ENCODE measurements at regions of chr20 and their contacts with region 1.

Region 1: GRCh38 chr20:37564388-37565133 is 36.9 kb upstream of the BLCAP start:
- DNase-seq: no peak
- ATAC-seq: peak; percentile 89
- H3K4me3 ChIP-seq: no peak overlapping the region
- H3K27ac ChIP-seq: no peak overlapping the region
- H3K4me1 ChIP-seq: peaks cover 4 to 9% of the 10 kb centered on the region in 2 experiments; a peak in 1 of 4 replicates
- H3K27me3 ChIP-seq: peaks cover 31% of the 10 kb centered on the region
- CTCF ChIP-seq: peak; percentile 82 to 94 (median 86)
- POLR2A ChIP-seq: no peak
- RAD21 ChIP-seq: peak; percentile 96

Region 2: DNA sequence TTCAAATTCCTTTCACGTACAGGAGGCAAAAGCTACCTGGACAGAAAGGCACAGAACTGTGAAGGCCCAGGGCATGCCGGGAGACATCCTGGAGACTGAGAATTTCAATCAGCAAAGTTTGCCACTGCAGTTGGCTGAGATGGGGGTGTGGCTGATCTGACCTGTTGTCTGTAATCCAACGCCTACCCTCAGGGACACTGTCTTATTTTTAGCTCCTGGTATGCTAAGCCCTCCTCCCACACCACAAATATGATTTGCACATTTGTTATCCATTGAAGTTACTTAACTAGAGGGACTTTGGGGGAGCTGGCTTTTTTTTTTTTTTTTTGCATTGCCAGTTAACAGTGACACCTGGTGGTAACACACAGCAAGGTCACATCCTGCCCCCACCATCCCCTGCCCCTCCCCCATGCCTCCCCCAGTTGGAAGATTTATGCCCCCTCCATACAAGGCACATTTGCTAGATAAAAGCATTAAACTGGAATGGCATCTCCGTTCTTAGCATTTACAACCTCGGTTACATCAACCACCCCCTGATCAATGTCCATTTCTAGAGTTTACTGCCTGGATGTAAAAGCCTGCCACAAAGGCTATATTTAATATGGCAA is 428.3 kb after region 1 on chr20:
- CTCF ChIA-PET with region 1: interaction called, 9 read pairs
- POLR2A ChIA-PET with region 1: no interaction called
- RAD21 ChIA-PET with region 1: interaction called in 1 of 2 experiments, 3 read pairs
- intact Hi-C with region 1: loop called (anchors 1 kb)
- DNase-seq: no peak
- ATAC-seq: peak; percentile 46; the same call in 1 of the 2 replicates
- H3K4me3 ChIP-seq: no peak overlapping the region
- H3K27ac ChIP-seq: no peak overlapping the region
- H3K4me1 ChIP-seq: 0 out of 4 replicates have a peak, but pooled peaks cover 0 to 3% of the 10 kb centered on the region in 2 experiments
- H3K27me3 ChIP-seq: no peaks in the 10 kb centered on the region
- CTCF ChIP-seq: peak; percentile 25 to 63 (median 46); a peak in 4 of 6 replicates
- POLR2A ChIP-seq: no peak
- RAD21 ChIP-seq: peak; percentile 37

Region 3: DNA sequence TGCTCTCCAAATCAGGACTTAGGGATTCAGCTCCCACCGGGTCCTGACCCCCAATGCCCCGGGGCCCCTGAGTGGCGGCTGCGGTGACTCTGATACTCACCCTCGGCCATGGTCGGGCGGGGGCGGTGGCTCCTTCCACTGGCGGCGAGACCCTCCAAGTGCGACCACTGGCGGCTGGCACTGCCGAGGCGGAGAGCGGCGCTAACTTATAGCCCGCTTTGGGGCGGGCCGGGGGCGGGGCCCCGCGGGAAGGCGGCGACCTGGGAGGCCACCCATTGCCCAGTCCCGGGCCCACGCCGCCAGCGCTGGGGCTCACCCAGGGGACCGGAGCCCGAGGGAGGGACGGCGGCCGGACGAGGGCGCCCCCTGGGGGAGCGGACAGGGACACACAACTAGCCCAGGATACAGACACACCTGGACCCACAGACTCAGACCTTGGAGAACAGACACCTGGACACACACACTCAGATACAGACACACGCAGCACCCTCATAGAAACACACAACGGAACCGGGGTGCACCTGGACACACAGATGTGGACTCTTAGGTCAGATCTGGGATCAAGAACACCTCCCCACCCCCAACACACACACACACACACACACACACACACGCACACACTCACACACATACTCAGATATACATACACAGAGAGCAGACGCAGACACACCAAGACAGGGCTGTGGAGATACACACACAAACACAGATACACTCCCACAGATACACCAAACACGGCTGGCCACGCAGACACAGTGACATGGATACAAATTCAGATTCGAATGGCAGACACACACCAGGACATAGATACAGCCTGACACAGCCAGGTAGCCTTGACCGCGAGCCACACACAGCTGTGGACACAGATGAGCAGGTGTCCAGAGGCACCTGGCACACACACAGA is 600.8 kb after region 1 on chr20 and contains the start of gene TGM2:
- CTCF ChIA-PET with region 1: no interaction called
- POLR2A ChIA-PET with region 1: no interaction called
- RAD21 ChIA-PET with region 1: no interaction called
- intact Hi-C with region 1: loop called (anchors 10 kb)
- DNase-seq: no peak
- ATAC-seq: peak; percentile 96
- H3K4me3 ChIP-seq: peak within 1 kb of the TSS; percentile 41 to 58
- H3K27ac ChIP-seq: no peak within 1 kb of the TSS; the same call in 1 of the 2 replicates
- H3K4me1 ChIP-seq: peaks cover 14 to 33% of the 10 kb centered on the region in 2 experiments; a peak in 3 of 4 replicates
- H3K27me3 ChIP-seq: no peaks in the 10 kb centered on the region
- CTCF ChIP-seq: peak; percentile 78 to 91 (median 81)
- POLR2A ChIP-seq: no peak
- RAD21 ChIP-seq: peak; percentile 86
- total RNA-seq, gene TGM2: 6.1 TPM

Region 4: DNA sequence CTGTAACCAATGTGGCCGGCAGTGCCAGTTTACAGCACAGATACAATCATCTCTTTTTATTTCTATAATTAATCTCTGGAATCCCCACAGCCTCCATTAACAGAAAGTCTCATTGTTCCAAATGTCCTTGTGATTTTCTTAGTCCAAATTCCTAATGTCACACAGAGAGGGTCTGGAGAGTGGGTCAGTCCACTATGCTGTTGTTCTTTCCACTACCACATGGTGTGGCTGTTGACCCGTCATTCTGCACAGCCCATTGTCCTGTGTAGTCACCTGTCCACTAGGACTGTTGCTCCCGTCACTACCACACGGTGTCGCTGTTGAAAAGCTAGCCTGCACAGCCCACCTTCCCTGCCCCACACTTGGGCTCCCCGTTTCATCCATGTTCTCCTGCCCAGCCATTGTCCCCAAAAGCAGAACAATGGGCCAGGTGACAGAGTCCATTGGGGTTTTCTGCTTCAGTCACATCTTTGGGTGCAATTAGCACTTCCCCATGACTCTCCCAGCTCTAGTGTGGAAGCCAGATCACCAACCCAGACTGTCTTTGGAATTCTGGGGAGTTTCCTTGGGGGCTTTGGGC is 773.1 kb after region 1 on chr20:
- CTCF ChIA-PET with region 1: no interaction called
- POLR2A ChIA-PET with region 1: no interaction called
- RAD21 ChIA-PET with region 1: no interaction called
- intact Hi-C with region 1: no loop called
- DNase-seq: peak; percentile 74
- ATAC-seq: peak; percentile 99
- H3K4me3 ChIP-seq: no peak overlapping the region
- H3K27ac ChIP-seq: no peak overlapping the region
- H3K4me1 ChIP-seq: no peaks in the 10 kb centered on the region
- H3K27me3 ChIP-seq: no peaks in the 10 kb centered on the region; the same call in 1 of the 2 replicates
- CTCF ChIP-seq: peak; percentile 95 to 96 (median 96)
- POLR2A ChIP-seq: no peak
- RAD21 ChIP-seq: peak; percentile 79

Region 5: DNA sequence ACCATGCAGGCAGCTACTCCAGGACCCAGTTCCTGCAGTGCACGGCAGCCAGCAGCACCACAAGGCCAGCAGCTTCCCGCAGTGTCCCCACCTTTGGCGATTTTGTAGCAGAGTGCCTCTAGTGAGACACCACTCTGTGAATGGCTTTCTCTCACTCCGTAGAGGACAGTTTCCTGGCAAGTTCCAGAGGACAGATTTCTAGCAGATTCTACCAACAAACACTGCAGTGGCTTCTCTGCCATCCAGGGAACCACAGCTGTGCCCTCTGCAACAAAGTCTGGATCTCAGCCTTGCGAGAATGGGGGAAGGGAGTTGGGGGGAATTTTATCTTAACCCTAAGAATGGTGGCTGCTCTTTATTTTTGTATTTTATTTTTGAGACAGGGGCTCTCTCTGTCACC is 841.9 kb after region 1 on chr20:
- CTCF ChIA-PET with region 1: interaction called, 7 read pairs
- POLR2A ChIA-PET with region 1: no interaction called
- RAD21 ChIA-PET with region 1: no interaction called
- intact Hi-C with region 1: loop called (anchors 5 kb)
- DNase-seq: no peak
- ATAC-seq: no peak
- H3K4me3 ChIP-seq: no peak overlapping the region
- H3K27ac ChIP-seq: no peak overlapping the region
- H3K4me1 ChIP-seq: no peaks in the 10 kb centered on the region; a peak in 1 of 4 replicates
- H3K27me3 ChIP-seq: no peaks in the 10 kb centered on the region
- CTCF ChIP-seq: no peak
- POLR2A ChIP-seq: no peak
- RAD21 ChIP-seq: no peak